Mammary epithelial cell (primary cell): ENCODE measurements at regions of chr11 and their contacts with region 1.

Region 1: GRCh38 chr11:128026596-128026995 is 560.8 kb downstream of the ETS1 start:
- DNase-seq: peak; percentile 99
- H3K4me3 ChIP-seq: no peak overlapping the region
- H3K27ac ChIP-seq: peak overlapping the region; percentile 87
- H3K4me1 ChIP-seq: peaks cover 31% of the 10 kb centered on the region
- H3K27me3 ChIP-seq: no peaks in the 10 kb centered on the region
- CTCF ChIP-seq: no peak

Region 2: GRCh38 chr11:127925475-127925874 is 101.1 kb before region 1 on chr11:
- CTCF ChIA-PET with region 1: no interaction called
- dilution Hi-C with region 1: no loop called
- in situ Hi-C with region 1: loop called in 1 of 2 experiments (anchors 10 kb)
- intact Hi-C with region 1: loop called (anchors 2 kb)
- DNase-seq: peak; percentile 93
- H3K4me3 ChIP-seq: no peak overlapping the region
- H3K27ac ChIP-seq: peak overlapping the region; percentile 56
- H3K4me1 ChIP-seq: peaks cover 17% of the 10 kb centered on the region
- H3K27me3 ChIP-seq: no peaks in the 10 kb centered on the region
- CTCF ChIP-seq: no peak

Region 3: GRCh38 chr11:128133501-128133900 is 106.9 kb after region 1 on chr11:
- CTCF ChIA-PET with region 1: no interaction called
- dilution Hi-C with region 1: no loop called
- in situ Hi-C with region 1: no loop called
- intact Hi-C with region 1: loop called (anchors 1 kb)
- DNase-seq: no peak
- H3K4me3 ChIP-seq: no peak overlapping the region
- H3K27ac ChIP-seq: no peak overlapping the region
- H3K4me1 ChIP-seq: peaks cover 32% of the 10 kb centered on the region
- H3K27me3 ChIP-seq: no peaks in the 10 kb centered on the region
- CTCF ChIP-seq: no peak

Region 4: DNA sequence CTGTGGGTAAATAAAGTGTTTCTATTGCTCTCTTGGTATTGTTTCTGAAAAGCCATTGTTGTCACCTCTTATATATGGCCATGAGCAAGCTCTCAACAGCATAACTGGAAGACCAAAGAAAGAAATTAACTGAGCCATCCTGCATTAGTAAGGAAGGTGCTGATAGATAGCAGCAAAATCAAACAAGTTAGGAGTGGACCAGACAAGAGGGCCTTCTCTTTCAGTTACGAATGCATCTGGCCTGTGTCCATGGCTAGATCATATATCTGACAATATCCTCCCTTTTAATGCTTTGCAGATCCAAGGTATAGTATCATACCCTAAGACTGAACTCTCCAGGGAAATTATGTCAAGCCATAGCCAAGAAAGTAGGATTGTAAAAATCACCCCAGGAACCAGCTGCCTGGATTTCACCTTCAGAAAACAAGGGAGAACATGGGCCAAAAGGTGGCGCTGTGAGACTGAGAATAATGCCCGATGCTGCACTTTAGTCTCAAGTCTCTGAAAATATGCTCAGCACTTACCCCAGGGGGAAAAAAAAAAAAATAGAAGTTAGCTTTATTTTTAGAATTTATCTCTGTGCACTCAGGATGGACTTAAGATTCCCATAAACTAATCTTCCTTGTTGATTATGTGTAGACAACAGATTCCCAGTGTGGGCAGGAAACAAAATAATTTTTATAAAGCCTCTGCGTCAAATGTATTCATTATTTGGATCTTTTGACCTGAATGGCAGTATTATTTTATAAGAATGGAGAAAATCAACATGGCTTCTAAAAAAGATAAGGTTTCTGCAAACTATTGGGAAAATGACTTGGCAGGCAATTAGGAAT is 145.7 kb after region 1 on chr11:
- CTCF ChIA-PET with region 1: no interaction called
- dilution Hi-C with region 1: no loop called
- in situ Hi-C with region 1: loop called in 1 of 2 experiments (anchors 10 kb)
- intact Hi-C with region 1: loop called (anchors 1 kb)
- DNase-seq: peak; percentile 69
- H3K4me3 ChIP-seq: no peak overlapping the region
- H3K27ac ChIP-seq: peak overlapping the region; percentile 72
- H3K4me1 ChIP-seq: peaks cover 8% of the 10 kb centered on the region
- H3K27me3 ChIP-seq: no peaks in the 10 kb centered on the region
- CTCF ChIP-seq: peak; percentile 81 to 84

Region 5: GRCh38 chr11:128210148-128210940 is 183.7 kb after region 1 on chr11:
- CTCF ChIA-PET with region 1: no interaction called
- dilution Hi-C with region 1: no loop called
- in situ Hi-C with region 1: no loop called
- intact Hi-C with region 1: no loop called
- DNase-seq: peak; percentile 100
- H3K4me3 ChIP-seq: no peak overlapping the region
- H3K27ac ChIP-seq: peak overlapping the region; percentile 94
- H3K4me1 ChIP-seq: peaks cover 57% of the 10 kb centered on the region
- H3K27me3 ChIP-seq: no peaks in the 10 kb centered on the region
- CTCF ChIP-seq: no peak